Activated B cell treated with CpG ODN at 0.5 μM for 24 hours (primary cell): ENCODE measurements at regions of chr16 and their contacts with region 1.

Region 1: GRCh38 chr16:11783319-11784037 is 13.6 kb downstream of the ZC3H7A start:
- DNase-seq: peak; percentile 32
- ATAC-seq: peak; percentile 76
- H3K4me3 Mint-ChIP-seq: peak overlapping the region; percentile 80
- H3K27ac Mint-ChIP-seq: peak overlapping the region; percentile 98
- H3K4me1 Mint-ChIP-seq: peaks cover 73% of the 10 kb centered on the region
- H3K27me3 Mint-ChIP-seq: no peaks in the 10 kb centered on the region
- CTCF ChIP-seq: no peak

Region 2: DNA sequence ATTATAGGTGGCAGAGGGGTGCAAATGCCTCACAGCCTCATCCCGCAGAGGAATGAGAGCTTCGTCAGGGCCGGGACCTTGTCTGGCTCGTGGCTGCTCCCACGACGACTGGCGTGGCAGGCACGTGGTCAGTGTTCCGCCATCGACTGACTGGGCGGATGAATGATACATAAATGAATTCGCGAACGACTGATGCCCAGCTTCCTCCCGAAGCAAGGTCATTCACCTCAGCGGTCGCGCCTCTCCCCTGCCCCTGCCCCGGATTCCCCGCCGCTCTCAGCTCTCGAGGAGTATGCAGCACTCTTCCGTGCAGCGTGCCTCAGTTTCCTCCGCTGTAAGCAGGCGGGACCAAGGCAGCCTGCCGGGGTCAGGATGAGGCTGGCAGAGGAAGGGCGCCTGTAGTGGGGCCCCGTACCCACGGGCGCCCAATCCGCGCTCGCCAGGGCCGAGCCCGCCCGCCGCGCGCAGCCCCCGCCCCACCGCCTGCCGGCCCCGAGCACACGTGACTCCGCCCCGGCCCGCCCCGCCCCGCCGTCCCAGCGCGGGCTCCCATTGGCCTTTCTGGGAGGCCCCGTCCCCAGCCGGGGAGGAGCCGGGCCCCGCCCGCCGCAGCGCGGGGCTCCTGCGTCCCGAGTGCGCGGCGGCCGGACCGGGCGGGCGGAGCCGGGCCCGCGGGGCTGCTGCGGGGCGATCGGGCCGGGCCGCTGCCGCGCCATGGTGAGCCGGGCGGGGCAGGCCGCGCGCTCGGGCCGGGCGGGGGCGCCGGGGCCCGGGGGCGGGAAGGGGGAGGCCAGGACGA is 115.5 kb before region 1 on chr16 and contains the start of gene SNN:
- CTCF ChIA-PET with region 1: no interaction called
- POLR2A ChIA-PET with region 1: interaction called, 3 read pairs
- intact Hi-C with region 1: loop called (anchors 1 kb)
- DNase-seq: peak; percentile 86
- ATAC-seq: peak; percentile 79
- H3K4me3 Mint-ChIP-seq: peak within 1 kb of the TSS; percentile 90
- H3K27ac Mint-ChIP-seq: peak within 1 kb of the TSS; percentile 89
- H3K4me1 Mint-ChIP-seq: peaks cover 72% of the 10 kb centered on the region
- H3K27me3 Mint-ChIP-seq: no peaks in the 10 kb centered on the region
- CTCF ChIP-seq: no peak
- total RNA-seq, gene SNN: 31.9 and 32.1 TPM in 2 replicates

Region 3: DNA sequence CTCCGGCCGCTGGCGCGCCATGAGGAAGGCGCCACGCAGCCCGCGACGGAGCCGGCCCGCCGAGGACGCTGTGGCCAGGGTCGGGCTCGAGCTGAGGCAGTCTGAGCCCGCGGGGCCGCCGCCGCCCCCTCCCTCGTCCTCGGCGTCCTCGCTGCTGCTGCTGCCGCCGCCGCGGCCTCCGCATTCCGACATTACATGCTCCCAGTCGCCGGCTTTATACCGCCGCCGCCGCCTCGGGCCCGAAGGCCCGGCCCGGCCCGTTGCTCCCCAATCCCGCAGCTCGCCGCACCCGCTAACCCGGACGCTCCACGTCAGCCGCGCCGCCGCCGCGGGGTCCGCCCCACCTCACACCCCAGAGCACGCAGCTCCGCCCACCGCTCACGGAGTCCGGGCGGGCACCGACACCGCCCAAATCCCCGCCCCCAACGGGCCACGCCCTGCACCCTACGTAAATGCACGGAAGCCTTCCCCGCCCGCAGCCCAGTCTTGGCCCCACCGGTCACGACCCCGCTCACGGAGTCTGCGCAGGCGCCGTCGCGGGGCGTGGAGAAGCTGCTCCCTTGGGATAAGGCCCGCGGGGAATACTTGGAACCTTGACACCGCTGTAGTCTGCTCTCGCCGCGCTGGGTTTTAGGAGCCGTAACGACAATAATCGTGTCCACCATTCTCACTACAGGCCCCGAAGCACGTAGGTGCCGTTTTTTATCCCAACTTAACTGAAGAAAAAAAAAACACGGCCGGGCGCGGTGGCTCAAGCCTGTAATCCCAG is 40.8 kb before region 1 on chr16 and contains the start of gene TXNDC11:
- CTCF ChIA-PET with region 1: interaction called, 3 read pairs
- POLR2A ChIA-PET with region 1: interaction called, 67 read pairs
- intact Hi-C with region 1: loop called (anchors 1 kb)
- DNase-seq: peak; percentile 100
- ATAC-seq: peak; percentile 91
- H3K4me3 Mint-ChIP-seq: peak within 1 kb of the TSS; percentile 89
- H3K27ac Mint-ChIP-seq: peak within 1 kb of the TSS; percentile 89
- H3K4me1 Mint-ChIP-seq: peaks cover 58% of the 10 kb centered on the region
- H3K27me3 Mint-ChIP-seq: no peaks in the 10 kb centered on the region
- CTCF ChIP-seq: no peak
- total RNA-seq, gene TXNDC11: 54.3 and 63.2 TPM in 2 replicates

Region 4: DNA sequence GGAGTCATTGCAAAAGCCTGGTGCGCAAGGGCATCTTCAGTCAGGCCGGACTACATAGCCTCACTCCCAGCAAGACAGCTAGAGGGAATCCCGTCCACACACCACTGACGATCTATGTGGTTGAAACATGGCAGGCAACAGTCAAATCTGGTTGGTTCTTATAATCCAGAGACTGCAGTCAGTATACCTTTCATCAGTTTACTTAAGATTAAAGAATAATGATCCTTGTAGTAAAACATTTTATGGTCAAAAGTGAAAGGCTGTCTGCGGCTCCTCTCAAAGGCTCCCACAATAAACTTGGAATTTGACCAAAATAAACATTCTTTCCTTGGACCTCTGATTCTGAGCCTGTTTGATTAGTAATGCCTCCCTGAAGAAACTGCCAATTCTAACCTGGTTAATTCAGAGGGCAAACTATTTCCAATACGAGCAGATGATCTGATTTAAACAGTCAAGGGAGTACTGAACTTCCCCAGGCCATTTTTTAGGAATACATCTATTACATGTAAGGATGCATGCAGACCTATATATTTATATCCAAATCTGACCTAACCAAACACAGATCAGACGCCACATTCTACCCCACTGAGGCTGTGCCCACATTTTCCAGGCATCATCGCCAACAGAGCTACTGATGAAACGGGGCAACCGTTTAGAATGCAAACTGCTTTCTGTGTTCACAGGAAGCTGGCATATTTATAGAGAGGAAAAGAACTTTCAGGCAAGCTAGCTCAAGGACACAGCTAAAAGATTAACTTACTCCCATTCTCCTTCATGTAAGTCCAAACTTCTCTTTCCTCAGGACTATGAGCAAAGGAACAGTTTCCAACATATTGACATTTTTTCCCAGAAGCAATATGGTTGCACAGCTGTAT is 25.6 kb before region 1 on chr16:
- CTCF ChIA-PET with region 1: no interaction called
- POLR2A ChIA-PET with region 1: interaction called, 56 read pairs
- intact Hi-C with region 1: loop called (anchors 1 kb)
- DNase-seq: no peak
- ATAC-seq: no peak
- H3K4me3 Mint-ChIP-seq: no peak overlapping the region
- H3K27ac Mint-ChIP-seq: no peak overlapping the region
- H3K4me1 Mint-ChIP-seq: peaks cover 31% of the 10 kb centered on the region
- H3K27me3 Mint-ChIP-seq: no peaks in the 10 kb centered on the region
- CTCF ChIP-seq: no peak

Region 5: DNA sequence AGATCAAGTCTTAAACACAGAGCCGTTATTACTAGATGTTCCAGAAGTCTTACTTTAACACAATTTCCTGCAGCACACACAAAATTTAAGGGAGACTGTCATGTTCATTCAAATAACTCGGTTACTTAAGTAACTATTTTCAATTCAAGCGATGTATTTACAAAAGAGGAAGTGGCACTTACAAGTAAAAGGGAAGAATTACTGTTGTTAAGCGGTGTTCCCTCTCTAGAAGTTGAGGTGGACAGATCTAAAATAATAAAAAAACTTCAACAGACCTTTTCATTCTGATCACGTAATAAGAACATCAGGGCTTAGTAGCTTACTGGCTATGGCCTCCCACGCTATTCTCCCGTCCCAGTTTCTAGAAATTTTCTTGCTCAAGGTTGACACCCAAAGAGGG is 14.6 kb before region 1 on chr16:
- CTCF ChIA-PET with region 1: interaction called, 4 read pairs
- POLR2A ChIA-PET with region 1: interaction called, 70 read pairs
- intact Hi-C with region 1: loop called (anchors 1 kb)
- DNase-seq: no peak
- ATAC-seq: peak; percentile 79
- H3K4me3 Mint-ChIP-seq: peak overlapping the region; percentile 61
- H3K27ac Mint-ChIP-seq: peak overlapping the region; percentile 90
- H3K4me1 Mint-ChIP-seq: peaks cover 50% of the 10 kb centered on the region
- H3K27me3 Mint-ChIP-seq: no peaks in the 10 kb centered on the region
- CTCF ChIP-seq: no peak

Region 6: GRCh38 chr16:11797166-11797956 is 13.9 kb after region 1 on chr16 and contains the start of gene ZC3H7A:
- CTCF ChIA-PET with region 1: interaction called, 58 read pairs
- POLR2A ChIA-PET with region 1: interaction called, 182 read pairs
- intact Hi-C with region 1: loop called (anchors 1 kb)
- DNase-seq: peak; percentile 94
- ATAC-seq: peak; percentile 97
- H3K4me3 Mint-ChIP-seq: peak within 1 kb of the TSS; percentile 95
- H3K27ac Mint-ChIP-seq: peak within 1 kb of the TSS; percentile 96
- H3K4me1 Mint-ChIP-seq: peaks cover 73% of the 10 kb centered on the region
- H3K27me3 Mint-ChIP-seq: no peaks in the 10 kb centered on the region
- CTCF ChIP-seq: no peak
- total RNA-seq, gene ZC3H7A: 143 and 163 TPM in 2 replicates

Region 7: DNA sequence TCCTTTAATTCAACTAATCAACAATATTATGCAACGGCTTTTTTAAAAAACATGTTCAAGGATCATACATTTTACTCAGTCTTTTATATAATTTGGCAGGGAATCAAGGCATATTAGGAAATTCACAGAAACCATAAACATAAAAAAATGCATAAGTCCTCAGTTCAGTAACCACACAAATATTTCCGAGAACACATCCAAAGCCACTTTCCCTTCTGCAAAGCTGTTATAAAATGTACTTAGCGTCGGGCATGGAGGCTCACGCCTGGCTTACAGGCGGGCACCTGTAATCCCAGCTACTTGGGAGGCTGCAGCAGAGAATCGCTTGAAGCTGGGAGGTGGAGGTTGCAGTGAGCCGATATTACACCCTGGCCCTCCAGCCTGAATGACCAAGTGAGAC is 23.2 kb after region 1 on chr16:
- CTCF ChIA-PET with region 1: no interaction called
- POLR2A ChIA-PET with region 1: interaction called, 8 read pairs
- intact Hi-C with region 1: loop called (anchors 1 kb)
- DNase-seq: no peak
- ATAC-seq: no peak
- H3K4me3 Mint-ChIP-seq: no peak overlapping the region
- H3K27ac Mint-ChIP-seq: no peak overlapping the region
- H3K4me1 Mint-ChIP-seq: peaks cover 16% of the 10 kb centered on the region
- H3K27me3 Mint-ChIP-seq: no peaks in the 10 kb centered on the region
- CTCF ChIP-seq: no peak